ENCODE measurements at regions of chr3 and their contacts with region 1.

Region 1: GRCh38 chr3:136250226-136250902 is at the start of gene PCCB:
- DNase-seq: peak; percentile 86 to 95 (median 93)
- ATAC-seq: peak; percentile 99
- H3K4me3 ChIP-seq: peak within 1 kb of the TSS; percentile 80
- H3K4me3 Mint-ChIP-seq: peak within 1 kb of the TSS; percentile 79 to 94 (median 90)
- H3K27ac ChIP-seq: peak within 1 kb of the TSS; percentile 80
- H3K27ac Mint-ChIP-seq: peak within 1 kb of the TSS; percentile 91 to 96 (median 93)
- H3K4me1 ChIP-seq: peaks cover 9% of the 10 kb centered on the region in 2 donors
- H3K4me1 Mint-ChIP-seq: peaks cover 12 to 30% (median 21%) of the 10 kb centered on the region in 7 donors
- H3K27me3 ChIP-seq: no peaks in the 10 kb centered on the region
- H3K27me3 Mint-ChIP-seq: no peaks in the 10 kb centered on the region
- total RNA-seq, gene PCCB: 13.6 to 22.6 (median 16.6) TPM

Region 2: GRCh38 chr3:135965506-135966270 is 284.7 kb before region 1 on chr3 and contains the start of gene PPP2R3A:
- CTCF ChIA-PET with region 1: no interaction called
- POLR2A ChIA-PET with region 1: no interaction called
- intact Hi-C with region 1: loop called in 1 of 2 experiments (anchors 1 kb)
- DNase-seq: peak; percentile 41 to 71 (median 59)
- ATAC-seq: peak; percentile 97
- H3K4me3 ChIP-seq: peak within 1 kb of the TSS; percentile 37
- H3K4me3 Mint-ChIP-seq: peak within 1 kb of the TSS; percentile 74 to 85 (median 81)
- H3K27ac ChIP-seq: no peak within 1 kb of the TSS
- H3K27ac Mint-ChIP-seq: peak within 1 kb of the TSS in 6 of 9 donors; percentile 8 to 66 (median 40)
- H3K4me1 ChIP-seq: peaks cover 5 to 7% of the 10 kb centered on the region in 2 donors
- H3K4me1 Mint-ChIP-seq: peaks cover 9 to 19% (median 12%) of the 10 kb centered on the region in 7 donors
- H3K27me3 ChIP-seq: no peaks in the 10 kb centered on the region
- H3K27me3 Mint-ChIP-seq: peaks cover 30 to 49% (median 41%) of the 10 kb centered on the region in 5 donors
- total RNA-seq, gene PPP2R3A: 0.13 to 0.89 (median 0.59) TPM in 4 of 5 experiments, not detected in the other

Region 3: DNA sequence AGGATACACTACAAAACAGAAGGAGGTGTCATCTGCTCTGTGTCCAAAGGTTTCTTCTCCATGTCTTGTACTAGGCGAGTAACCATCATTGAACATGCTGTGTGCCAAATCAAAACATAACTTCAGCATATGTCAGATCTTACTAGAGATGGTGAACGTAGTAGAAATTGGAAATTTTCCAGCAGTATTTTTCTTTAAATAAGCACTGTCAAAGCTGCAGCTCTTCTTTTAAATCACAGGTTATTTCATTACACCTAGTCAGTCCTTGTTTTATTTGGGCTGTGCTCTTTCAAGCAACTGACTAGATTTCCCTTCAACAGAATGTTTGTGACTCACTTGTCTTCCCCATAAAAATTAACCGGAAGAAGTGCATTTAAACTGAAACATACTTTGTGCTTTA is 100.7 kb before region 1 on chr3:
- CTCF ChIA-PET with region 1: no interaction called
- POLR2A ChIA-PET with region 1: no interaction called
- intact Hi-C with region 1: loop called in 1 of 2 experiments (anchors 2 kb)
- DNase-seq: no peak
- ATAC-seq: no peak
- H3K4me3 ChIP-seq: no peak overlapping the region
- H3K4me3 Mint-ChIP-seq: peak overlapping the region in 1 of 10 donors; percentile 16
- H3K27ac ChIP-seq: no peak overlapping the region
- H3K27ac Mint-ChIP-seq: peak overlapping the region in 7 of 9 donors; percentile 1 to 78 (median 44)
- H3K4me1 ChIP-seq: peaks cover 0 to 14% of the 10 kb centered on the region in 2 donors
- H3K4me1 Mint-ChIP-seq: peaks cover 24 to 72% (median 61%) of the 10 kb centered on the region in 7 donors
- H3K27me3 ChIP-seq: no peaks in the 10 kb centered on the region
- H3K27me3 Mint-ChIP-seq: no peaks in the 10 kb centered on the region

Region 4: DNA sequence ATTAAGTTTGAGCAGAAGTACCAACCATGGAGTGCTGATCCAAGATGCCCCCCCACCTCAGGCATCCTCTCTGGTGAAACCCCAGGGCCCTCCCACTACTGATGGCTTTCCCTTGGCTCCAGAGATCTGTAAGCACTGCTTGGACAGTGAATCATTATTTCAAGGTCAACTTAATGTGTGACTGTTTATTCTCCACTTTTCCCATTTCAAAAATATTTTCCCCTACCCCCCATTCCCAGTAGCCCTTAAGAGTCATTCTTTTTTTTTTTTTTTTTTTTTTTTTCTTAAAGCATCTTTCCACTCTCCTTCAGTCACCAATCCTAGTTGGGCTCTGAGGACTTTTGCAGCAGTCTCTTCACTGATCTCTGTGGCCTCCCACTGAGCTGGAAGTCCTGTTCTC is 82.4 kb after region 1 on chr3:
- CTCF ChIA-PET with region 1: no interaction called
- POLR2A ChIA-PET with region 1: no interaction called
- intact Hi-C with region 1: loop called in 1 of 2 experiments (anchors 5 kb)
- DNase-seq: no peak
- ATAC-seq: no peak
- H3K4me3 ChIP-seq: no peak overlapping the region
- H3K4me3 Mint-ChIP-seq: no peak overlapping the region
- H3K27ac ChIP-seq: no peak overlapping the region
- H3K27ac Mint-ChIP-seq: peak overlapping the region in 6 of 9 donors; percentile 17 to 77 (median 46)
- H3K4me1 ChIP-seq: no peaks in the 10 kb centered on the region
- H3K4me1 Mint-ChIP-seq: peaks cover 0 to 4% (median 0%) of the 10 kb centered on the region in 7 donors
- H3K27me3 ChIP-seq: no peaks in the 10 kb centered on the region
- H3K27me3 Mint-ChIP-seq: no peaks in the 10 kb centered on the region

Measured in naive thymus-derived CD4-positive, alpha-beta T cell (primary cell).